PC-9 (cell line): ENCODE measurements at regions of chrX and their contacts with region 1.

Region 1: DNA sequence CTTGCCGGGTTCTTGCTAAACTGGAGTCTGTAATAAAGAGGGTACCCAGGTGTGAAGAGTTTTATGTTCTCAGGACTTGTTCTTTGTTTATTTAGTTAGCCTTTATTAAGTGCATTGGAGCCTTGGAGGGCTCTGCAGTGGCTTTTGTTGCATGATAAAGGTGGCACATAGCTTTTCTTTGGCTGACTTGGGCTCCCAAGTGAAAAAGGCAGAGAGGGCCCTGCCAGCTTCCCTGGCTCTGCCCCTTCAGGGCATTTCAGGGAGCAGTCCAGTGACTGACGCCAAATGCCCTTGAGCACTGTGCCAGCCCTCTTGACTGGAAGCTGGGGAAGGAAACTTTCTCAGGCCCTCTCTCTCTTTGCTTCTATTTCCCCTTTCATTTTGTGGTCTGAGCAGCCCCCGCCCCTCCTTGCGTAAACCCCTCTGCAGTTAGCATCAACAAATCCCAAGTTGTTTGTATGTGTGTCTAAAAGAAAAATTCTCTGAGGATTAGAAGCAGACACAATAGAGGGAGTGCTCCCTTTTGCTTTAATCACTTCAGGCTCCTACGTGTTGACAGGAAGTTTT is 152.2 kb downstream of the NHS start:
- DNase-seq: peak; percentile 67 to 85
- H3K4me3 ChIP-seq: no peak overlapping the region; the same call in 1 of the 2 replicates
- H3K27ac ChIP-seq: peak overlapping the region; percentile 88
- H3K4me1 ChIP-seq: peaks cover 46% of the 10 kb centered on the region
- H3K27me3 ChIP-seq: no peaks in the 10 kb centered on the region
- CTCF ChIP-seq: no peak

Region 2: GRCh38 chrX:17559728-17560379 is 32.6 kb after region 1 on chrX:
- CTCF ChIA-PET with region 1: no interaction called
- POLR2A ChIA-PET with region 1: no interaction called
- intact Hi-C with region 1: loop called (anchors 1 kb)
- DNase-seq: peak; percentile 63 to 92
- H3K4me3 ChIP-seq: peak overlapping the region; percentile 29; the same call in 1 of the 2 replicates
- H3K27ac ChIP-seq: peak overlapping the region; percentile 90
- H3K4me1 ChIP-seq: peaks cover 50% of the 10 kb centered on the region
- H3K27me3 ChIP-seq: no peaks in the 10 kb centered on the region
- CTCF ChIP-seq: no peak; the same call in 1 of the 2 replicates

Region 3: DNA sequence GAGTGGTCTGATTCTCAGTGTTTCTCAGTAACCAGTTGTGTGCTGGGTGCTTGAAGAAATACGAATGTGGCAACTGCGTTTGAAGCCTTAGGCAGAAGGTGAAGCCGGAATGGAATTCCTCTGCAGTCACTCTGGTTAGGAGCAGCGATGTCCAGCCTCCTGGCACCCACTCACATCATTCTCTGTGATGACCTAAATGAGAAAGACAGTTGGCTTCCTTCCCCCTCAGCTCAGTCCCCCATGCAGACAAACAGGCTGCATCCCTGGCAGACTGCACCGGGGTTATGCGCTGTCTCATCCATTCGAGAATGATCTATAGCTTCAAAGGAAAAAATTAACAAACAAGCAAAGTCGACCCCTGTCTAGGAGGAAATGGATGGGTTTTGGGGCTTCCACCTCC is 40.0 kb after region 1 on chrX:
- CTCF ChIA-PET with region 1: interaction called, 15 read pairs
- POLR2A ChIA-PET with region 1: no interaction called
- intact Hi-C with region 1: no loop called
- DNase-seq: no peak
- H3K4me3 ChIP-seq: no peak overlapping the region
- H3K27ac ChIP-seq: no peak overlapping the region
- H3K4me1 ChIP-seq: peaks cover 11% of the 10 kb centered on the region
- H3K27me3 ChIP-seq: no peaks in the 10 kb centered on the region
- CTCF ChIP-seq: no peak